ENCODE measurements at regions of chr2 and their contacts with region 1.

Region 1: GRCh38 chr2:160429248-160430000 is 64.2 kb downstream of the RBMS1 start:
- DNase-seq: no peak
- ATAC-seq: peak in 2 of 8 donors; percentile 35 to 53
- H3K4me3 ChIP-seq: no peak overlapping the region
- H3K27ac ChIP-seq: peak overlapping the region in 8 of 10 donors; percentile 59 to 79 (median 68)
- H3K4me1 ChIP-seq: peaks cover 10 to 82% (median 69%) of the 10 kb centered on the region in 9 donors
- H3K27me3 ChIP-seq: no peaks in the 10 kb centered on the region
- CTCF ChIP-seq: peak; percentile 45 to 74 (median 64)

Region 2: GRCh38 chr2:160332318-160332717 is 97.1 kb before region 1 on chr2:
- intact Hi-C with region 1: loop called in 1 of 10 experiments (anchors 5 kb)
- DNase-seq: peak in 1 of 2 donors; percentile 37
- ATAC-seq: peak in 7 of 8 donors; percentile 39 to 81 (median 45)
- H3K4me3 ChIP-seq: no peak overlapping the region
- H3K27ac ChIP-seq: peak overlapping the region in 3 of 10 donors; percentile 56 to 82 (median 67)
- H3K4me1 ChIP-seq: peaks cover 5 to 100% (median 95%) of the 10 kb centered on the region in 9 donors
- H3K27me3 ChIP-seq: no peaks in the 10 kb centered on the region
- CTCF ChIP-seq: peak in 5 of 9 donors; percentile 10 to 41 (median 25)

Region 3: GRCh38 chr2:160582490-160583145 is 153.2 kb after region 1 on chr2:
- intact Hi-C with region 1: loop called in 1 of 10 experiments (anchors 10 kb)
- DNase-seq: no peak
- ATAC-seq: peak in 4 of 8 donors; percentile 46 to 72 (median 56)
- H3K4me3 ChIP-seq: no peak overlapping the region
- H3K27ac ChIP-seq: peak overlapping the region; percentile 5 to 77 (median 55)
- H3K4me1 ChIP-seq: peaks cover 0 to 38% (median 29%) of the 10 kb centered on the region in 9 donors
- H3K27me3 ChIP-seq: no peaks in the 10 kb centered on the region
- CTCF ChIP-seq: no peak

Region 4: GRCh38 chr2:160674146-160674750 is 244.8 kb after region 1 on chr2:
- intact Hi-C with region 1: loop called in 2 of 10 experiments (anchors 10 kb)
- DNase-seq: no peak
- ATAC-seq: peak in 4 of 8 donors; percentile 33 to 55 (median 36)
- H3K4me3 ChIP-seq: no peak overlapping the region
- H3K27ac ChIP-seq: no peak overlapping the region
- H3K4me1 ChIP-seq: peaks cover 0 to 18% (median 0%) of the 10 kb centered on the region in 9 donors
- H3K27me3 ChIP-seq: no peaks in the 10 kb centered on the region
- CTCF ChIP-seq: no peak

Region 5: DNA sequence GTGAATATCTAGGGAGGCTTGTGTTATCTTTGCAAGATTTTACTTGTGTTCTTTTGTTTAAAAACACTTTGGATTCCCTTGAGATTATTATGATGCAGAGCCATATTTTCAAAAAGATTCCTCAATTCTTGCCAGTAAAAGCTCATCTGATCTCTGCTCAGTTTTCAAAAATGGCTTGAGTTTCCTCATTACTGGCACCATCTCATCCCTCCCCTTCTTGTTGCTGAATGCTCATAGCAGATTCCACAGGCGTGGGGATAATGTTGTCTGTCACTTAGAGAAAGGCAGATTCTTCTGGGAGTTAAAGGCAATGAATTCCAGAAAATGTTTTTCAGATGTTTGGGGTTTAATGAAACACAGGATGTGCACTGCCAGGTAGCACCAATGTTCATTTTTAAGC is 560.4 kb after region 1 on chr2:
- intact Hi-C with region 1: no loop called
- DNase-seq: no peak
- ATAC-seq: no peak
- H3K4me3 ChIP-seq: no peak overlapping the region
- H3K27ac ChIP-seq: no peak overlapping the region
- H3K4me1 ChIP-seq: peaks cover 0 to 21% (median 11%) of the 10 kb centered on the region in 9 donors
- H3K27me3 ChIP-seq: no peaks in the 10 kb centered on the region
- CTCF ChIP-seq: no peak

Measured in heart right ventricle (tissue), 16 donors.